Mammary epithelial cell (primary cell): ENCODE measurements at regions of chr6 and their contacts with region 1.

Region 1: GRCh38 chr6:118263921-118264486 is 284.1 kb upstream of the PLN start:
- DNase-seq: no peak
- H3K4me3 ChIP-seq: no peak overlapping the region
- H3K27ac ChIP-seq: no peak overlapping the region
- H3K4me1 ChIP-seq: no peaks in the 10 kb centered on the region
- H3K27me3 ChIP-seq: no peaks in the 10 kb centered on the region
- CTCF ChIP-seq: peak; percentile 27 to 57

Region 2: DNA sequence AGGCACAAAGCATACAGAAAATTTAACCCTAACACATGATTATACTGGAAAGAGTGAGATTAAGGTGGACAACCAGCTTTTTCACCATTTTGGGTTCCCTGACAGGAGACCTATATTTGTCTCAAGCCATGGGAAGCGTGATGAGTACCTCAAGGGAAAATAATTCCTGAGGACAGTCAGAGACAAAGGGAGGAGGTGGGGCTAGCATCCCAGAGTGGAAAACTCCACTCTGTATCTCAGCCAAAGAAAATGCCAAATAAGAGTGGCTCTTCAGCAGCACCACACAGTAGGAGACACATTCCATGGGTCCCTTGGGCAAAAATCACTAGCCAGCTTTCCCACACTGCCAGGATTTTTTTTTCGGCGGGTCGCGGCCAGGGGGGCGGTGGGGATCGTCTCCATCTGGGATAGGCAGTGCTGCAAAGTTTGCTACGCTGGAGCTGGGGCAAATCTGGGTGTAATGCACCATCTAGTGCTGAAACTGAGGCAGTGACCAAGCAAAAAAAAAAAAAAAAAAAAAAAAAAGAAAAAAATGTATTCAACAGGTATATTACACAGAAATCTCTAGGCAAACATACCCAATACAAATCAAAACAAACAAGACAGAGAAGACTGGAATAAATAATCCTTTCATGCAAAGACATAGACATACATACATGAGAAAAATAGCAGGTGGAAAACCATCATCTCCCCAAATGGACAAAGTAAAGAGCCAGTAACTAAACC is 434.2 kb before region 1 on chr6:
- CTCF ChIA-PET with region 1: no interaction called
- dilution Hi-C with region 1: no loop called
- in situ Hi-C with region 1: loop called (anchors 25 kb)
- intact Hi-C with region 1: no loop called
- DNase-seq: peak; percentile 33
- H3K4me3 ChIP-seq: peak overlapping the region; percentile 42 to 55 (median 48)
- H3K27ac ChIP-seq: no peak overlapping the region
- H3K4me1 ChIP-seq: no peaks in the 10 kb centered on the region
- H3K27me3 ChIP-seq: no peaks in the 10 kb centered on the region
- CTCF ChIP-seq: peak; percentile 27 to 69

Region 3: GRCh38 chr6:117840541-117840983 is 423.4 kb before region 1 on chr6:
- CTCF ChIA-PET with region 1: no interaction called
- dilution Hi-C with region 1: no loop called
- in situ Hi-C with region 1: loop called (anchors 25 kb)
- intact Hi-C with region 1: loop called (anchors 1 kb)
- DNase-seq: peak; percentile 42
- H3K4me3 ChIP-seq: no peak overlapping the region
- H3K27ac ChIP-seq: no peak overlapping the region
- H3K4me1 ChIP-seq: no peaks in the 10 kb centered on the region
- H3K27me3 ChIP-seq: peaks cover 1% of the 10 kb centered on the region
- CTCF ChIP-seq: peak; percentile 29 to 53

Region 4: GRCh38 chr6:117976030-117976651 is 287.9 kb before region 1 on chr6:
- CTCF ChIA-PET with region 1: no interaction called
- dilution Hi-C with region 1: no loop called
- in situ Hi-C with region 1: loop called (anchors 10 to 25 kb)
- intact Hi-C with region 1: loop called (anchors 1 kb)
- DNase-seq: peak; percentile 30
- H3K4me3 ChIP-seq: no peak overlapping the region
- H3K27ac ChIP-seq: no peak overlapping the region
- H3K4me1 ChIP-seq: no peaks in the 10 kb centered on the region
- H3K27me3 ChIP-seq: no peaks in the 10 kb centered on the region
- CTCF ChIP-seq: peak; percentile 63 to 81